K562 (cell line): ENCODE measurements at regions of chr1 and their contacts with region 1.

Region 1: DNA sequence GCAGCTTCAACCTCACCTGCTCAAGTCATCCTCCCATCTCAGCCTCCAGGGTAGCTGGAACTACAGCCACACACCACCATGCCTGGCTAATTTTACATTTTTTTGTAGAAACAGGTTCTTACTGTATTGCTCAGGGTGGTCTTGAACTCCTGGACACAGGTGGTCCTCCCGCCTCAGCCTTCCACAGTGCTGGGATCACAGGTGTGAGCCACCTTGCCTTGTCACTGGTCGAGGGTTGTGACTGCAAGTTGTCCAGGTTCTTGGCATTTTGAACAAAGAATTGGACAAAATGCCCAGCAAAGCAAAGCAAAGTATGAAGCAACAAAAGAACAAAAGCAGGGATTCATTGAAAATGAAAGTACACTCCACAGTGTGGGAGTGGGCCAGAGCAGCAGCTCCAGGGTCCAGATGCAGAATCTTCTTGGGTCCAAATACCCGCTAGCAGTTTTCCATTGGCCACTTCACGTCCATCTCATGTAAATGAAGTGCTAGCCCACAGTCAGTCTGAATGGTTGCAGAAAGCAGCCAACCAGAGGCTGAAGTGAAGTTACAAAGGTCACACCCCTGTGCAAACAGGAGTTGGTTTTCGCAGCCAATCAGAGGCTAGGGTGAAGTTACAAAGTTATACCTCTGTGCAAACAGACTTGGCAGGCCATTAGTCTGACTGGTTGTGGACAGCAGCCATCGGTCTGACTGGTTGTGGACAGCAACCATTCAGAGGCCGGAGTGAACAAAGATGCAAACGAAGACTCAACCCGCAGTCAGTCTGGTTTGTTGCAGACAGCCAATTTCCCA is 109.5 kb upstream of the KIF26B start:
- DNase-seq: peak in 1 of 4 experiments; percentile 35
- ATAC-seq: peak; percentile 75
- H3K4me3 ChIP-seq: no peak overlapping the region
- H3K27ac ChIP-seq: no peak overlapping the region
- H3K4me1 ChIP-seq: peaks cover 0 to 20% of the 10 kb centered on the region in 2 experiments; a peak in 3 of 5 replicates
- H3K27me3 ChIP-seq: no peaks in the 10 kb centered on the region
- CTCF ChIP-seq: no peak
- EP300 ChIP-seq: no peak
- POLR2A ChIP-seq: no peak
- RAD21 ChIP-seq: no peak

Region 2: DNA sequence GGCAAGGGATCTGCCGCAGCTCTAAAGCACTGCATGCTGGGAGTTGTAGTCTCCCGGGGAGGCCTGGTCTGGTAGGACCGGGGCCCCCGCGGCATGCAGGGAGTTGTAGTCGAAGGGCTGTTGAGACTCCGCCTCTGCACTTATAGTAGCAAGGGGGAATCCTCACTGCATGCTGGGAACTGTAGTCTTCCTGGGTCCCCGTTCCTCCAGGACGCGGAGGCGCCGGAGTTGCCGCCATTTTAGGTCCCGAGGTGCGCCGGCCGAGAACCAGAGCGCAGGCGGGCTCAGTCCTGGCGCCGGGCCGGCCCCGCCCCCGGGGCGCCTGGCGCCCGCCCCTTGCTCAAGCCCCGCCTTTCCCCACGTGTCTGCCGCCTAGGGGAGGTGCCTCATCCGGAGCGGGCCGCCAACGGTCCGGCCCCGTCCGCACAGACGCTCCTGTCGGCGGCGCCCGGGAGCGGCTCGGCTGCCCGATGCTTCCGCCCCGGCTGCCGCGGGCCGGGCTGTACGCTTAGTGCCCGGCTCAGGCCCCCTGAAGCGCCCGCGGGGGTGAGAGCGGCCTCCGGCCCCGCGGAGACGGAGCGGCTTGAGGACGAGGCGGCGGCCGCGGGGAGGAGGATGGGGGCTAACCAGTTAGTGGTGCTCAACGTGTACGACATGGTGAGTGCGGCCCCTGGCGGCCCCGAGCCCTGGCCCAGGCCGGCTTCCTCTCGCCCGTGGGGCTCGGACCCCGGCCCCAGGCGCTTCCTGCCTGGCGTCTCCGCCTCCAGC is 392.4 kb before region 1 on chr1 and contains the start of gene DESI2:
- CTCF ChIA-PET with region 1: no interaction called
- POLR2A ChIA-PET with region 1: no interaction called
- in situ Hi-C with region 1: no loop called
- intact Hi-C with region 1: loop called (anchors 5 kb)
- DNase-seq: peak; percentile 98 to 99 (median 98)
- ATAC-seq: peak; percentile 95
- H3K4me3 ChIP-seq: peak within 1 kb of the TSS; percentile 76
- H3K27ac ChIP-seq: peak within 1 kb of the TSS; percentile 77
- H3K4me1 ChIP-seq: peaks cover 11 to 25% of the 10 kb centered on the region in 2 experiments
- H3K27me3 ChIP-seq: no peaks in the 10 kb centered on the region
- CTCF ChIP-seq: peak; percentile 54 to 60 (median 60)
- EP300 ChIP-seq: no peak; the same call in 1 of the 2 replicates
- POLR2A ChIP-seq: peak; percentile 86
- RAD21 ChIP-seq: peak; percentile 46 to 55
- polyA plus RNA-seq, gene DESI2: 17.4 to 20.4 TPM

Region 3: DNA sequence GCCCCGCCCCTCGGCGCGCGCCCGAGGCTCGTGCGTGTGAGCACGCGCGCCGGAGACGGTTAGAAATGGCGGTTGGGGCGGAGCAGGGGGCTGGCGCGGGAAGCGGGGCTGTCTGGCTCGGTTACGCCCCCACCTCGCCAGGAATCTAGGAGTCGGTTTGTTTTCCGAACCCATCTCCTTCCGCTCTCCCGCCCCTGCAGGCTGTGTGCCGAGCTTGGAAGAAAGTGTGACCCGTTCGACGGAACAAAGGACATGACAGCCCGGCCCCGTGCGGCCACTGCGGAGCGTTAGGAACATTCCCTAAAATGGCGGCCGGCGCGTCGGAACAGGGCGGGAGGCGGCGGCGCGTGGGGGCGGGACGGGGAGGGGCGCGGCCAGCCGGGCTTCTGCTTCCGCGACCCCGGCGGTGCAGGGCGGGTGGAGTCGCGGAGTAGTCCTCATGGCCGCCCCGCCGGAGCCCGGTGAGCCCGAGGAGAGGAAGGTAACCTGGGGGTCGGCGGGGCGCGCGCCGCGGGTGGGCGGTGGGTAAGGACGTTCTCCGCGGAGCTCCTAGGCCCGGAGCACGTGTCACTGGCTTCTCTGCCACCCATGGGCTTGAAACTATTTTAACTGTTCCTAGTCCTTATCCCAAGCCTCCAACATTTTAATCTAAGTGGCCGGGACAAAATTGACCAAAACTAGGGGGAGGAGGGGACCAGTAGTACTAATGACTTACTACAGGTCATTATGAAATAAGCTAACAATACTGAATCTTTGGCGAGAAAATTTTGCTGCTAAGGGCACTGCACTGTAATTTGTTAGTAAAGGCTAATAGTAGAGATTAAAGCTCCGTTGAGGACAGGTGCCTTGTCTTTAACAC is 209.8 kb before region 1 on chr1 and contains the start of gene COX20:
- CTCF ChIA-PET with region 1: no interaction called
- POLR2A ChIA-PET with region 1: interaction called, 5 read pairs
- in situ Hi-C with region 1: no loop called
- intact Hi-C with region 1: loop called (anchors 10 kb)
- DNase-seq: peak; percentile 94 to 98 (median 95)
- ATAC-seq: peak; percentile 79
- H3K4me3 ChIP-seq: peak within 1 kb of the TSS; percentile 74
- H3K27ac ChIP-seq: peak within 1 kb of the TSS; percentile 98
- H3K4me1 ChIP-seq: peaks cover 14 to 15% of the 10 kb centered on the region in 2 experiments; a peak in 4 of 5 replicates
- H3K27me3 ChIP-seq: no peaks in the 10 kb centered on the region
- CTCF ChIP-seq: no peak
- EP300 ChIP-seq: 0 out of 2 replicates have a peak, but pooled peaks have one; percentile 40
- POLR2A ChIP-seq: peak; percentile 97
- RAD21 ChIP-seq: no peak
- polyA plus RNA-seq, gene COX20: 145 to 171 TPM

Region 4: GRCh38 chr1:244864253-244865027 is 180.8 kb before region 1 on chr1 and contains the start of gene HNRNPU:
- CTCF ChIA-PET with region 1: interaction called, 3 read pairs
- POLR2A ChIA-PET with region 1: interaction called, 19 read pairs
- in situ Hi-C with region 1: loop called (anchors 5 kb)
- intact Hi-C with region 1: loop called (anchors 1 kb)
- DNase-seq: peak; percentile 93 to 99 (median 93)
- ATAC-seq: peak; percentile 86
- H3K4me3 ChIP-seq: peak within 1 kb of the TSS; percentile 96
- H3K27ac ChIP-seq: peak within 1 kb of the TSS; percentile 98
- H3K4me1 ChIP-seq: peaks cover 15% of the 10 kb centered on the region in 2 experiments; a peak in 4 of 5 replicates
- H3K27me3 ChIP-seq: no peaks in the 10 kb centered on the region
- CTCF ChIP-seq: peak; percentile 14 to 55 (median 43); a peak in 3 of 6 replicates
- EP300 ChIP-seq: peak; percentile 46
- POLR2A ChIP-seq: peak; percentile 98
- RAD21 ChIP-seq: peak in 1 of 2 experiments; percentile 10; a peak in 2 of 4 replicates
- polyA plus RNA-seq, gene HNRNPU: 159 to 174 TPM

Region 5: GRCh38 chr1:244970661-244971551 is 74.4 kb before region 1 on chr1:
- CTCF ChIA-PET with region 1: interaction called, 4 read pairs
- POLR2A ChIA-PET with region 1: no interaction called
- in situ Hi-C with region 1: loop called (anchors 5 kb)
- intact Hi-C with region 1: loop called (anchors 1 kb)
- DNase-seq: peak; percentile 87 to 99 (median 91)
- ATAC-seq: peak; percentile 83
- H3K4me3 ChIP-seq: peak overlapping the region; percentile 53
- H3K27ac ChIP-seq: peak overlapping the region; percentile 95
- H3K4me1 ChIP-seq: peaks cover 10 to 21% of the 10 kb centered on the region in 2 experiments; a peak in 4 of 5 replicates
- H3K27me3 ChIP-seq: no peaks in the 10 kb centered on the region
- CTCF ChIP-seq: peak; percentile 65 to 78 (median 74)
- EP300 ChIP-seq: peak; percentile 3; the same call in 1 of the 2 replicates
- POLR2A ChIP-seq: peak; percentile 95
- RAD21 ChIP-seq: peak; percentile 32 to 39